ENCODE measurements at regions of chr16 and their contacts with region 1.

Region 1: DNA sequence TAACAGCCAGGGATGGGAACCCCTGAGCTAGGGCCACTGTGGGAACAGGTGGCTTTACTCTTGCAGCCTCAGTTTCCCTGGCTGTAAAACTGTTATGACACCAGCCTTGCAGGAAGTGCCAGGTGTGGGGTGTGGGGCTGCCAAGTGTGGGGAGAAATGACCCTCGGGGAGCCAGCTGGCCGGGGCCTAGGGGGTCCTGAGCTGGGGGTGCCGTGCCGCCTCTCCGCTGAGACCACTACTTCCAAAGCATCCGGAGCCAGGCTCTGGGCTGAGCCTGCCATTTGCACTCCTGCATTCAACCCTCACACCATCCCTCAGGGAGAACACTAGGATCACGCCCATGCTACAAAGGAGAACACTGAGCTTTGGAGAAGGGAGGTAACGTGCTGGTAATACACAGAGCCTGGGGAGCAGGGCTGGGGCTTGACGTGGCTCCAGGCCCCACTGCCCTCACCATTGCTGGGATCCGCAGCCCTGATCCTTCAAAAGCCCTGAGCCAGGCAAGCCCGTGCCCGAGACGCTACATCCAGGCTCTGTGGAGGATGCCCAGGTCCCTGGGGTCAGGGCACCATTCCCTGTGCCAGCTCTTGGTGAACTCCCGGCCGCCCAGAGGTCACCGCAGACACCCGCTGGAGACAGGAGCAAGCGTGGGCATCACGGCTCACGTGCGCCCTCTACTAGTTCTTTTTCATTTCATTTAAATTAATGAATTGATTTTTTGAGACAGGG is 28.8 kb upstream of the GINS2 start:
- DNase-seq: peak; percentile 60 to 77
- ATAC-seq: peak; percentile 65

Region 2: GRCh38 chr16:85275533-85276249 is 441.9 kb before region 1 on chr16:
- intact Hi-C with region 1: loop called in 1 of 2 experiments (anchors 10 kb)
- DNase-seq: peak; percentile 42 to 75
- ATAC-seq: peak; percentile 89

Measured in left colon (tissue), 2 donors.